CD4-positive, alpha-beta memory T cell (primary cell): ENCODE measurements at regions of chr2 and their contacts with region 1.

Region 1: DNA sequence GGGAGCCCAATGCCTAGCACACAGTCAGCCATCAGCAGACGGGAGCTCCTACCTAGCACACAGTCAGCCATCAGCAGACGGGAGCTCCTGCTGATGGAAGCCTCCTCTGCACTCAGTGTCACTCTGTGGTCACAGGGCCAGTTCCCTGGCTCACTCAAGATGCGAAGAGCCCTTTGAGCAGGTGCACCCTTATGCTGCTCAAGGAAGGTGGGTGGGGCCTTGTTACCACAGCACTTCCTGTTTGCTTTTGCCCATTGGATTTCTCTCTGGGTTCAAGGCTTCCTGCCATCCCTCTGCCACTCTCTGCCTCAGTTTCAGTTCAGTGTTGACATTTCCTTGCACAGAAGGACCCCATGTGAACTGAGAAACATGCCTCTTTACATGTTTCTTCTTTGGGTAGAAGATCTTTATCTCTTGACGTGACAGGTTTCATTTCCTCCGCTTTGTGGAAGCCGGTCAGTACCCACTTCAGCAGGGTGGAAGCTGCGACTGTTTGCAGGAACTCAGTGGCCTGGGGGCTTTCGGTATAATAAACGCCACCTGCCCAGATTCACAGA is 11.6 kb downstream of the TRIB2 start:
- DNase-seq: peak; percentile 76 to 86 (median 83)
- H3K4me3 ChIP-seq: peak overlapping the region; percentile 29 to 34
- H3K4me3 Mint-ChIP-seq: peak overlapping the region; percentile 65 to 86 (median 78)
- H3K27ac ChIP-seq: peak overlapping the region; percentile 47
- H3K27ac Mint-ChIP-seq: peak overlapping the region; percentile 87 to 96 (median 91)
- H3K4me1 ChIP-seq: peaks cover 100% of the 10 kb centered on the region
- H3K4me1 Mint-ChIP-seq: peaks cover 70 to 99% (median 92%) of the 10 kb centered on the region in 4 donors
- H3K27me3 ChIP-seq: no peaks in the 10 kb centered on the region
- H3K27me3 Mint-ChIP-seq: no peaks in the 10 kb centered on the region

Region 2: GRCh38 chr2:12555012-12555645 is 173.2 kb before region 1 on chr2:
- CTCF ChIA-PET with region 1: no interaction called
- POLR2A ChIA-PET with region 1: no interaction called
- intact Hi-C with region 1: no loop called
- DNase-seq: peak in 2 of 5 donors; percentile 18 to 19
- H3K4me3 ChIP-seq: no peak overlapping the region
- H3K4me3 Mint-ChIP-seq: peak overlapping the region; percentile 6 to 75 (median 56)
- H3K27ac ChIP-seq: no peak overlapping the region
- H3K27ac Mint-ChIP-seq: peak overlapping the region; percentile 74 to 94 (median 87)
- H3K4me1 ChIP-seq: peaks cover 31% of the 10 kb centered on the region
- H3K4me1 Mint-ChIP-seq: peaks cover 33 to 49% (median 38%) of the 10 kb centered on the region in 4 donors
- H3K27me3 ChIP-seq: no peaks in the 10 kb centered on the region
- H3K27me3 Mint-ChIP-seq: no peaks in the 10 kb centered on the region

Region 3: DNA sequence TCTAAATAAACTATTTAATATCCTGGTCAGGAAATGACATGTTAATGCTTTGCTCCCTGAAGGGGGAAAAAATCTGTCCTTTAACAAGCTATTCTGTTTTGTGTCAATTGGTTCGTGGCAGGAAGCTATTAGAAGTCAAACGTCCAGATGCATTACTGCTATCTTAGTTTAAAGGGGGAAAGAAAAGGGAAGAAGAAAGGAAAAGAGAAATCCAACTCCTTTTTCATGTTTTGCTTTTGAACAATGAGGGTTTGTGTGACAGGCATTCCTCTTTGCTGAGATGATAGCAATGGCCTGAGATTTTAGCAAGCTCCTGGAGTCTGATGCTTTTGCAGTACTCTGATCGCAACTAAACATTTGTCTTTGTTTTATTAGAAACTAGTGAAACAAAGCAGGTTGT is 13.1 kb after region 1 on chr2:
- CTCF ChIA-PET with region 1: interaction called, 11 read pairs
- POLR2A ChIA-PET with region 1: interaction called, 9 read pairs
- intact Hi-C with region 1: no loop called
- DNase-seq: no peak
- H3K4me3 ChIP-seq: no peak overlapping the region
- H3K4me3 Mint-ChIP-seq: no peak overlapping the region
- H3K27ac ChIP-seq: no peak overlapping the region
- H3K27ac Mint-ChIP-seq: peak overlapping the region in 3 of 7 donors; percentile 1 to 9 (median 5)
- H3K4me1 ChIP-seq: peaks cover 19% of the 10 kb centered on the region
- H3K4me1 Mint-ChIP-seq: peaks cover 20 to 41% (median 28%) of the 10 kb centered on the region in 4 donors
- H3K27me3 ChIP-seq: no peaks in the 10 kb centered on the region
- H3K27me3 Mint-ChIP-seq: no peaks in the 10 kb centered on the region

Region 4: GRCh38 chr2:12856934-12857601 is 128.8 kb after region 1 on chr2:
- CTCF ChIA-PET with region 1: interaction called, 5 read pairs
- POLR2A ChIA-PET with region 1: interaction called, 11 read pairs
- intact Hi-C with region 1: no loop called
- DNase-seq: peak; percentile 68 to 83 (median 78)
- H3K4me3 ChIP-seq: peak overlapping the region in 1 of 2 donors; percentile 7
- H3K4me3 Mint-ChIP-seq: peak overlapping the region in 1 of 8 donors; percentile 1
- H3K27ac ChIP-seq: no peak overlapping the region
- H3K27ac Mint-ChIP-seq: peak overlapping the region in 3 of 7 donors; percentile 77 to 82 (median 80)
- H3K4me1 ChIP-seq: peaks cover 71% of the 10 kb centered on the region
- H3K4me1 Mint-ChIP-seq: peaks cover 0 to 21% (median 8%) of the 10 kb centered on the region in 4 donors
- H3K27me3 ChIP-seq: no peaks in the 10 kb centered on the region
- H3K27me3 Mint-ChIP-seq: no peaks in the 10 kb centered on the region